Naive thymus-derived CD8-positive, alpha-beta T cell (primary cell): ENCODE measurements at regions of chr6 and their contacts with region 1.

Region 1: DNA sequence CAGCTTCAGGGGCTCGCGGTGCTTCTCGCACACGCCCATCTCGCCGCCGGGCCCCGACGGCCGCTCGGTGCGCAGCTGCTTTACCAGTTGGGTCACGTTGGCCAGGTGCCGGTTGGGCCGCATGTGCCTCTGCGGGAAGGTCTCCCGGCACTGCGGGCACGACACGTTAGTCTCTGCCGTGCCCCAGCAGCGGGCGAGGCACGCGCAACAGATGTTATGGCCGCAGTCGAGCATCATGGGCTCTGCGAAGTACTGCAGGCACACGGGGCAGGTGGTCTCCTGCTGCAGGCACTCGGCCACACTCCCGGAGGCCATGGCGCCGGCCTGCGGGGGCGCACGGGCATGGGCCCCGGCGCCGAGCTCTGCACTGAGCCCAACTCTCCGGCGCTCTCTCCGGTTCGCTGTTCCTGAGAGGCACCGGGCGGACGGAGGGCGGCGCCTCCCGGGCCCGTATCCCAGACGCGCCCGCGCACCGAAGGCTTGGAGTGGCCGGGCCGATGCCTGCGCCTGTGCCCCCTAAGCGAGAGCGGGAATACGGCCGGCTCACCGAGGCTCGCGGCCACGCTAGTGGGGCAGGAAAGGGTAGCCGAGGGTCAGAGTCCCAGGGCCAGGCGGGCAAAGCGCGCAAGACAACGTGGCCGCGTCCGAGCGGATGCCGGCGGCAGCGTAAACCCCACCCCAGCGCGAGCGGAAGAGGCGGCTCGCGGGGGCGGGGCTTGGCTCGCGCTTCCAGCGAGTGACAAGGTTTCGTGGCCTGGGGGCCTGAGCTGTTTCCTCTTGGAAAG is at the start of gene TRIM27:
- DNase-seq: peak; percentile 57 to 83 (median 78)
- ATAC-seq: peak; percentile 78 to 80
- H3K4me3 Mint-ChIP-seq: peak within 1 kb of the TSS; percentile 86 to 98 (median 94)
- H3K27ac Mint-ChIP-seq: peak within 1 kb of the TSS; percentile 89 to 96 (median 94)
- H3K4me1 Mint-ChIP-seq: peaks cover 7 to 47% (median 40%) of the 10 kb centered on the region in 4 donors
- H3K27me3 Mint-ChIP-seq: no peaks in the 10 kb centered on the region
- polyA plus RNA-seq, gene TRIM27: 37.5 to 71.3 (median 44.2) TPM

Region 2: GRCh38 chr6:28880894-28881780 is 42.4 kb before region 1 on chr6:
- POLR2A ChIA-PET with region 1: interaction called, 39 read pairs
- DNase-seq: peak in 9 of 10 donors; percentile 39 to 77 (median 67)
- ATAC-seq: no peak
- H3K4me3 Mint-ChIP-seq: peak overlapping the region; percentile 80 to 93 (median 87)
- H3K27ac Mint-ChIP-seq: peak overlapping the region; percentile 67 to 98 (median 88)
- H3K4me1 Mint-ChIP-seq: peaks cover 16 to 54% (median 42%) of the 10 kb centered on the region in 4 donors
- H3K27me3 Mint-ChIP-seq: peaks cover 0 to 10% (median 0%) of the 10 kb centered on the region in 5 donors

Region 3: DNA sequence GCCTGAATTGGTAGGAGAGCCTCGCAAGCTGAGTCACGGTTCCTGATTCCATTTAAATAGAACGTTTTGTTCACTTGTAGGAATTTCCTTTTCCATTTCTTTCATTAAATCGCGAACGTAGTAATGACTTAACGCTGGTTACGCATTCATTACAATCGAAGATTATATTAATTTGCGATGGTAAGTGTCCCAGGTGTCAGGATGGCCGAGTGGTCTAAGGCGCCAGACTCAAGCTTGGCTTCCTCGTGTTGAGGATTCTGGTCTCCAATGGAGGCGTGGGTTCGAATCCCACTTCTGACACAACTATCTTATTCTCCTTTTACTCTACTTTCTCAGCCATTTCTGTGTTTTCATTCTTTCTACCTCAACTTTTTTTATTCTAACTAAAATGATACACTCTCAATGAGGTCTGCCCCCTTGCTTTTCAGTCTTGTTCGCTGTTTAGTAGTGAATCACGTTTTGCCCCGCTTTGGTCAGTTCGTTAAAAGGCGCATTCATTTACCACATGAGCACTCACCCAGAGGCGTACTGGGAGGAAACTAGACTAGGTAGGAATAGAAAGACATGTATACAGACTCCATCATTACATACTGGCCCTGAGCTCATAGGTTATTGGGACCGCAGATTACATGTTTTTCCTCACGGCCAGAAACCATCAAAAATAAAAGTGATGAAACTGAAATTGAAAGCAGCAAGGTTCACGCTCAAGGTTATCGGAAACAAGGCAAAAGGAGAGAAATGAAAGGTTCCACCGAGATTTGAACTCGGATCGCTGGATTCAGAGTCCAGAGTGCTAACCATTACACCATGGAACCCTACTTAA is 17.6 kb after region 1 on chr6:
- POLR2A ChIA-PET with region 1: interaction called, 152 read pairs
- DNase-seq: peak; percentile 41 to 89 (median 84)
- ATAC-seq: peak; percentile 65 to 70
- H3K4me3 Mint-ChIP-seq: peak overlapping the region; percentile 84 to 98 (median 94)
- H3K27ac Mint-ChIP-seq: peak overlapping the region; percentile 92 to 99 (median 94)
- H3K4me1 Mint-ChIP-seq: peaks cover 27 to 61% (median 56%) of the 10 kb centered on the region in 4 donors
- H3K27me3 Mint-ChIP-seq: peaks cover 0 to 11% (median 0%) of the 10 kb centered on the region in 5 donors

Region 4: GRCh38 chr6:28981833-28982475 is 58.4 kb after region 1 on chr6:
- POLR2A ChIA-PET with region 1: interaction called, 15 read pairs
- DNase-seq: peak; percentile 49 to 95 (median 76)
- ATAC-seq: peak; percentile 61 to 74
- H3K4me3 Mint-ChIP-seq: peak overlapping the region; percentile 79 to 97 (median 92)
- H3K27ac Mint-ChIP-seq: peak overlapping the region; percentile 86 to 100 (median 93)
- H3K4me1 Mint-ChIP-seq: peaks cover 31 to 76% (median 62%) of the 10 kb centered on the region in 4 donors
- H3K27me3 Mint-ChIP-seq: peaks cover 9 to 43% (median 31%) of the 10 kb centered on the region in 5 donors